Natural killer cell (primary cell): ENCODE measurements at regions of chr5 and their contacts with region 1.

Region 1: DNA sequence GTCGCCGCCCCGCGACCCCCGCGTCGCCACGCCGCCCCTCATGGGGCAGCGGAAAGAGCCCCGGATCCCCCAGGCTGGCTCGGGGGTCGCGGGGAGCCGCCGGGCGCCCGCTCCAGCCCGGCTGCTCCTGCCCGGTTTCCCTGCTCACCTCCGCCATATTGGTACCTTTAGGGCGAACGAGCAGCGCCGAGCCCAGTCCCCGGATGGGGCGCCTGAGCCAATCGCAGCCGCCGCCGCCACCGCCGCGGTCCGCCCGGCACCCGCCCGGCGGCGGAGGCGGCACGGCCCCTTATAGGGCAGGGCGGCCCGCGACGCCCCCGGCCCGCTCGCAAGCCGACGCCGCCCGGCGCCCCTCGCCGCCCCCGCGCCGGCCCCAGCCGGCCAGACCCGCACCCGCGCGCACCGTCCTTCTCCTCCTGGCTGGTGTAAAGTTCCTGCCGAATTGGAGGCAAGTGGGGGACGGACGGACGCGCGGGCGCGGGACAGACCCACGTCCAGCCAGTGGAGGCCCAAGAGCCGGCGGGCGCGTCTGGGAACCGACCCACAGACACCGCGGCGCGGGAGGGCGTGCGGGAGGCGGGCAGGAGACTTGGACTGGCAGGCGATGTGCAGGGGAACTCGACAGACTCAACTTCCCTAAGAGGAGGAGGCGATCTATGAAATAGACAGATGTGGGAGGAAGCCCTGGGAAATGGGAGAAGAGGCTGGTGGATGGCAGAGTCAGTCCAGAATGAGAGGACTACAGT is at the start of gene MIER3:
- DNase-seq: peak; percentile 80 to 86
- ATAC-seq: peak; percentile 94 to 97 (median 96)
- H3K4me3 ChIP-seq: peak within 1 kb of the TSS; percentile 56
- H3K4me3 Mint-ChIP-seq: peak within 1 kb of the TSS; percentile 87
- H3K27ac ChIP-seq: peak within 1 kb of the TSS; percentile 8
- H3K27ac Mint-ChIP-seq: peak within 1 kb of the TSS; percentile 74 to 80
- H3K4me1 ChIP-seq: peaks cover 13% of the 10 kb centered on the region
- H3K4me1 Mint-ChIP-seq: peaks cover 28 to 30% of the 10 kb centered on the region in 2 donors
- H3K27me3 ChIP-seq: peaks cover 15% of the 10 kb centered on the region
- H3K27me3 Mint-ChIP-seq: peaks cover 15 to 25% of the 10 kb centered on the region in 2 donors
- CTCF ChIP-seq: no peak
- total RNA-seq, gene MIER3: 20.4 to 30.8 (median 29.0) TPM

Region 2: GRCh38 chr5:56129288-56129687 is 822.8 kb before region 1 on chr5:
- intact Hi-C with region 1: no loop called
- DNase-seq: no peak
- ATAC-seq: no peak
- H3K4me3 ChIP-seq: no peak overlapping the region
- H3K4me3 Mint-ChIP-seq: no peak overlapping the region
- H3K27ac ChIP-seq: no peak overlapping the region
- H3K27ac Mint-ChIP-seq: no peak overlapping the region
- H3K4me1 ChIP-seq: no peaks in the 10 kb centered on the region
- H3K4me1 Mint-ChIP-seq: no peaks in the 10 kb centered on the region
- H3K27me3 ChIP-seq: no peaks in the 10 kb centered on the region
- H3K27me3 Mint-ChIP-seq: peaks cover 6 to 20% of the 10 kb centered on the region in 2 donors
- CTCF ChIP-seq: no peak

Region 3: DNA sequence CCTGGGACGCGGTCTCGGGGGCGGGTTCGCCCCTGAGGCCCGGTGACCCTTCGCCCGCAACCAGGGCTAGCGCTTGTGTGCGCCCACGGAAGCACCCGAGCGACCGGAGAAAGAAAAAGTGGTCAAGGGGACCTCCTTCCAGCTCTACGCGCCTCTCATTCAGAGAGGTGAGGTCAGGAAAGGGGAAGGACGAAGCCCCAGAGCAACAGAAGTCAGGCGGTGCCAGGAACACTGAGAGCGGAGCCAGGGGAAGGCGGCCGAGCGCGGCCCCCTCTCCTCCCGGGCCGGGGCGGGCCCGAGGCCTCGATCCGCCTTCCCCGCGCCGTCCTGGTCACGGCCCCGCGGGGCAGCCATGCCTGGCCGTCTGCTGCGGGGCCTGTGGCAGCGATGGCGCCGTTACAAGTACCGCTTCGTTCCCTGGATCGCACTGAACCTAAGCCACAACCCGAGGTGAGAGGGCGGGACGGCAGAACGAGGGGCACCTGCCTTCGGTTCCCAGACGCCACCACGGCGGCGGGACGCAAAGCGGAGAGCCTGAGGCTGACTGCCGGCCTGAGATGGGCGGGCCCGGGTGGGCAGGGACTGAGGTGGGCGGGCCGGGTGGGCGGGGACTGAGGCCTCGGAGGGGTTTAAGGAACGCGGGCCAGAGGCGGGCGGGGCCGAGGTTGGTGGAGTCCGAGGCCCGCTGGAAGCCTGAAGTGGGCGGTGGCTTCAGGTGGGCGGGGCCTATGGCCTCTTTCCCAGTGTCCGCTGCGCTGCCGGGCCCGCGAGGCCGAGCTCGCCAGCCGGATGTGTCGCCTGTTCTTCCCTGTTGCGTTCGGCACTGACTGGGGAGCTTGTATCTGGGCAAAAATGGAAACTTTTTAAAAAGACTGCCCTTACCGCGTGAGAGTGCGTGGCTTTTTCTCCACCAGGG is 42.6 kb before region 1 on chr5 and contains the start of gene SETD9:
- intact Hi-C with region 1: loop called (anchors 2 kb)
- DNase-seq: peak; percentile 81 to 92
- ATAC-seq: peak; percentile 82 to 92 (median 85)
- H3K4me3 ChIP-seq: peak within 1 kb of the TSS; percentile 58
- H3K4me3 Mint-ChIP-seq: peak within 1 kb of the TSS; percentile 99
- H3K27ac ChIP-seq: peak within 1 kb of the TSS; percentile 78
- H3K27ac Mint-ChIP-seq: peak within 1 kb of the TSS; percentile 90 to 93
- H3K4me1 ChIP-seq: peaks cover 10% of the 10 kb centered on the region
- H3K4me1 Mint-ChIP-seq: peaks cover 21 to 23% of the 10 kb centered on the region in 2 donors
- H3K27me3 ChIP-seq: no peaks in the 10 kb centered on the region
- H3K27me3 Mint-ChIP-seq: no peaks in the 10 kb centered on the region
- CTCF ChIP-seq: no peak
- total RNA-seq, gene SETD9: 5.6 to 8.6 (median 6.0) TPM